Transverse colon (tissue), 4 donors: ENCODE measurements at regions of chr2 and their contacts with region 1.

Region 1: DNA sequence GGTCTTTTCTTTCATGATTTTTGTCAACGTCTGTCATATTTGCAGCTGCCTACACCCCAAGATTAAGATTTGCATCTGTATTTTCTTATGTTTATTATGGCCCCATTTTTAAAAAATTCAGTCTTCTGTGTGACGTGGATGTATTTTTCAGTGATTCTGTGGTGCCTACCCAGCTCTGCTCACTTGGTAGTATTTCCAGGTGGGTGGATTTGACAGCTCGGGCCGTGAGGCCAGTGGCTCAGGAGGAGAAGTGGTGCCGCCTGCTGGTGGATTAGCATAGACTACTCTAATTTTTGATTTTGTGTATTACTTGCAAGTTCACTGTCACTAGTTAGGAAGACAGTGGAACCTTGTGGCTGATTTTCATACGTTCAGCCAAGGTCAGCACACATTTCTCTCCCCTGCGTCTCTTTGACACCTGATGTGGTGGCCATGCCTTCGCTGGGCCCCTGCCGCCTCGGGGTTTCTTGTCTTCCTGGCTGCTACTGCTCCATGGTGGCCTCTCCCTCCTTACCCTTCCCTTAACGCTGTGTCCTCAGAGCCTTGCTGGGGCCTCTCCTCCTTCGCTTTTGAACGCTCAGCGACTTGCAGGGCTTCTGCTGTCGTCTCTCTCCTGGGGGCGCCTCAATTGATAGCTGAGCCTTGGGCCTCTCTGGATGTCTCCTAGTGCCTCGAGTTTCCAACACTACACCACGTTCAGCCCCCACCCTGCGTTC is 89.3 kb downstream of the DGKD start:
- DNase-seq: peak; percentile 89
- H3K4me3 ChIP-seq: no peak overlapping the region
- H3K27ac ChIP-seq: peak overlapping the region in 1 of 4 donors; percentile 12
- H3K4me1 ChIP-seq: peaks cover 0 to 10% (median 2%) of the 10 kb centered on the region in 4 donors
- H3K27me3 ChIP-seq: no peaks in the 10 kb centered on the region
- CTCF ChIP-seq: peak; percentile 75 to 95 (median 78)
- EP300 ChIP-seq: no peak
- POLR2A ChIP-seq: no peak

Region 2: GRCh38 chr2:233288719-233289118 is 154.9 kb before region 1 on chr2:
- in situ Hi-C with region 1: loop called in 1 of 4 experiments (anchors 25 kb)
- intact Hi-C with region 1: no loop called
- DNase-seq: no peak
- H3K4me3 ChIP-seq: no peak overlapping the region
- H3K27ac ChIP-seq: no peak overlapping the region
- H3K4me1 ChIP-seq: no peaks in the 10 kb centered on the region
- H3K27me3 ChIP-seq: no peaks in the 10 kb centered on the region
- CTCF ChIP-seq: no peak
- EP300 ChIP-seq: no peak
- POLR2A ChIP-seq: no peak

Region 3: DNA sequence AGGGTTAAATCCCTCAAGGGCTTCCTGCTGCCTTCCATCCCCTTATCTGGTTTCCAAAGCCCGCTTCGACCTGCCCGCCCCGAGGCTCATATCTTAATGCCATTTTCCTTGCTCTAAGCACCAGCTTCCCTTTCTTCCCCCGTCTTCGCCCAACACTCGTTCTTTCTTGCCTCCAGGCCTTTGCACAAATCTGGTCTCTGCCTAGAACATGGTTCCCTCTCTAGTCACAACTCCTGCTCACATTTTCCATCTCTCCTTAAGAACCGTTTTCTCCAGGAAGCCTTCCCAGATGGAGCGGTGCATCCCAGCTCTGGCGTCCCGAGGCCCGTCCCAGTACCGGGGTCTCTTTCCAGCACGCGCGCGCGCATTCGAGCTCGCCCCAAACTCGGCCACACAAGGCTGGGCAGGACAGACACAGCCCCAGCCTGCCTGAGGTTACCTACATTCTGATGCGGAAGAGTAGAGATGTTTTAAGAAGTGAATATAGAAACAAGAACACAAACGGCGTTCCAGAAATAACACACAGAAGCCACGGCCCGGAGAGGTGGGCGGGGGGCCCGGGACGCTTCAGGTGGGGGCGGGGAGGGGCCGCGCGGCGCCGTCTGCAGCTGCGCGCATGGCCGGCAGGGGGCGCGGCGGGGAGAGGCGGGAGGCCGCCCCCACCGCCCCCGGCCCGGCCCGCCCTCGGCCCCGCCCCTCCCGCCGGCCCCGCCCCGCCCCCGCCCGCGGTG is 89.7 kb before region 1 on chr2 and contains the start of gene DGKD:
- in situ Hi-C with region 1: no loop called
- intact Hi-C with region 1: loop called (anchors 5 kb)
- DNase-seq: peak; percentile 73
- H3K4me3 ChIP-seq: peak within 1 kb of the TSS; percentile 72 to 84 (median 81)
- H3K27ac ChIP-seq: peak within 1 kb of the TSS; percentile 80 to 84 (median 80)
- H3K4me1 ChIP-seq: peaks cover 3 to 77% (median 57%) of the 10 kb centered on the region in 4 donors
- H3K27me3 ChIP-seq: no peaks in the 10 kb centered on the region
- CTCF ChIP-seq: peak; percentile 29 to 60 (median 54)
- EP300 ChIP-seq: no peak
- POLR2A ChIP-seq: peak; percentile 22
- total RNA-seq, gene DGKD: 55.7 to 166 (median 91.5) TPM